H1 (cell line): ENCODE measurements at regions of chrX and their contacts with region 1.

Region 1: DNA sequence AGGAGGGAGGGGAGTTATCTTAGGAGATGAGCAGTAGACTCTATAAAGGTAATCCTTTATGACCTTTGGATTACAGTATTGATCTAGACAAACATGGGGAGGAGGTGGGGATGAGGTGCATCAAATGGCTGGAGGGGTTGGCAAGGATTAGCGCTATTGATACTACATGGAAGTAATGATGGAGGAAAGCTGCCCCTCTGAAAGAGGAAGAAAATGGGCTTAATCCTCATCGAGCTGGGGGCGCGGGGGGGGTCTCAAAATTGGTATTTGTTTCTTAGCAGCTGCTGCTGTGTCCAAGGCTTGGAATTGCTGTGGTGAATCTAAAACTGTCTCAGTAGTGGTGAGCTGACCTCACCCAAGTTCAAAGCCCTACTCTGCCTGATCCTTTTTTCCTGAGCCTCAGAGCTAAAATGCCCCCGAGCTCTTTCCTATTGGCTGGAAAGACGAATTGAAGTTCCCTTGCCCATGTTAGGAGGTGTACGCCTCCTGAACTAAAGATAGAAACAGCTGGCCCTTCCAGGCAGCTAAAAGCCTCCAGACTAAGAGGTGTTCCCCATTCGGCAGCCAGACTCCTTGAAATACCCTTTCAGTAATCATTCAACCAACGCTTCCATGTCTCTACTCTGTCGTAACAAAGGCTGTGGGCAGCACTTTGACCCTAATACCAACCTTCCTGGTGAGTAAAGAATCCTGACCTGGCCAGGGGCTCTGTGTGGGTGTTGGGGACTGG is at the start of gene ITGB1BP2:
- DNase-seq: no peak
- H3K4me3 ChIP-seq: no peak within 1 kb of the TSS
- H3K27ac ChIP-seq: no peak within 1 kb of the TSS
- H3K4me1 ChIP-seq: no peaks in the 10 kb centered on the region
- H3K27me3 ChIP-seq: no peaks in the 10 kb centered on the region
- CTCF ChIP-seq: no peak
- EP300 ChIP-seq: no peak
- POLR2A ChIP-seq: peak in 1 of 2 experiments; percentile 28; a peak in 1 of 3 replicates
- RAD21 ChIP-seq: no peak
- total RNA-seq, gene ITGB1BP2: 5.1 and 5.2 TPM in 2 replicates

Region 2: DNA sequence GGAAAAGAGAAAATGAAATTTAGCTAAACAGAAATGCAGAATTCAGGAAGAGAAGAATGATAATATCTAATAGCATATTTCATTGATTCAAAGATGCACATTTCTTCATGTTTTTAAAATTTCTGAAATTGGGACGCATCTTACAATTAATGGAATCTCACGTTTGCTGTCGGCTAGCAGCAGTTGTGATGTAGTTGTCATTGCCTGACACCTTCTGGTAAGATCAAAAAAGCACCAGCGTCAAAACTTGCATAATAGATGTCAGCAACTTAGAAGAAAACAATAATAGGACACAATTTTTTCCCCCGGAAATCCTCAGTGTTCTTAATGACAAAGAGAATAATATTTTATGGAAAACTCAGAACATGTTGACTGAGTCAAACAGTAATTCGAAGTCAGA is 340.6 kb before region 1 on chrX:
- CTCF ChIA-PET with region 1: no interaction called
- POLR2A ChIA-PET with region 1: no interaction called
- DNase-seq: no peak
- H3K4me3 ChIP-seq: no peak overlapping the region
- H3K27ac ChIP-seq: no peak overlapping the region
- H3K4me1 ChIP-seq: no peaks in the 10 kb centered on the region
- H3K27me3 ChIP-seq: no peaks in the 10 kb centered on the region
- CTCF ChIP-seq: peak in 2 of 3 experiments; percentile 32 to 39; a peak in 2 of 4 replicates
- EP300 ChIP-seq: no peak
- POLR2A ChIP-seq: no peak
- RAD21 ChIP-seq: peak; percentile 62 to 76

Region 3: DNA sequence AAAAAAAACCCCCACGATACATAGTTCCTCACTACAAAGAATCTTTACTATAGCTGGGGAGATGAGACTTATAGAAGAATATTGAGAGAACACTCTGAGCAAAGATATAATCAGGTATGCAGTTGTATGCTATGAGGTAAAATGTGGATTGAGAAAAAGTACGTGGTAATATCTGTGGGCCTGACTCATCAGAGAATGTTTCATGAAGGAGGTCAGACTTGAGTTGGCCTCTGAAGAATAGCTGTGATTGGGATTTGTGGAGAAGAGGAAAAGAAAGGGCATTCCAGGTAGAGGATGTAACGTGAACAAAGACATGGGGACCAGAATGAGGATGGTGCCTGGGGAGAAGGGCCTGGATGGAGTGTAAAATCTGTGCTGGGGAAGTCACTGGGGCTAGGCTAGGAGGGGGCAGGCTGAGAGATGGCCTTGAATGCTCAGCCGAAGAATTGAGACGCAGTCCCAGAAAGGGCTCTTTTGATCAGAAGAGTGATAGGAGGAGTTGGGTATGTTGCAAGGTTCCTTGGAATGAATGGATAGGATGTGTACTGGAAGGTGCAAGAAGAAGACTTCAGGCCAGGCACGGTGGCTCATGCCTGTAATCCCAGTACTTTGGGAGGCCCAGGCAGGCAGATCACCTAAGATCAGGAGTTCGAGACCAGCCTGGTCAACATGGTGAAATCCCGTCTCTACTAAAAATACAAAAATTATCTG is 162.2 kb before region 1 on chrX:
- CTCF ChIA-PET with region 1: no interaction called
- POLR2A ChIA-PET with region 1: no interaction called
- DNase-seq: no peak
- H3K4me3 ChIP-seq: no peak overlapping the region
- H3K27ac ChIP-seq: no peak overlapping the region
- H3K4me1 ChIP-seq: peaks cover 0 to 1% (median under 1%) of the 10 kb centered on the region in 4 experiments; a peak in 1 of 7 replicates
- H3K27me3 ChIP-seq: no peaks in the 10 kb centered on the region
- CTCF ChIP-seq: no peak
- EP300 ChIP-seq: no peak
- POLR2A ChIP-seq: no peak
- RAD21 ChIP-seq: no peak

Region 4: DNA sequence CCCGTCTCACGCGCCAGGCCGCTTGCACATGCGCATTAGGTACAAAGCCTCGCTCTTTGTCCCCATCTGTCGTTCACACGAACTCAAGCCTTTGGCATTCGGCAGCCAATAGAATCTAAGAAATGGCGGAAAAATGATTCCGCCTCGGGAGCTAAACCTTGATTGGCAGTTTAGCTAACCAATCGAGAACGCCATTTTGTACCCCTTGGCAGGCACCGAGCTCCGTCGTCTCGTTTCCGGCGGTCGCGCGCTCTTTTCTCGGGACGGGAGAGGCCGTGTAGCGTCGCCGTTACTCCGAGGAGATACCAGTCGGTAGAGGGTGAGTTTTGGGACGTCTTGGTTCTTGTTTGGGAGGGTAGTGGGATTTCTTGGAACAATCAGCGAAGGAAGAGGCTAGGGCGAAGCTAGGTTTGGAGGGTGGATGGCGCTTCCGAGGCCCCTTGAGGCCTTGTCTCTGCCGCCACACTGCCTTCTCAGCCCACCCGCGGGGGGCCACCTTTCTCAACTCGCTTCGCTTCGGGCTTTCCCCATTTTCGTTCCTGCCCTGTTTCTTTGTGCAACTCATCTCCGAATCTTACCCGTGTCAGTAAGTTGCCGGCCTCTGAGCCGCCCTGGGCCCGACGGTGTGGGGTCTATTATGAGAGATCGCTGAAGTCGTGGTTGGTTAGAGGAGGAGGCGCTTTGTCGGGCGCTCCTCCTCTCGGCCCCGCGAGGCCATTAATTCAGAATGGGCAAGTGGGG is 17.8 kb before region 1 on chrX and contains the start of gene NONO:
- CTCF ChIA-PET with region 1: no interaction called
- POLR2A ChIA-PET with region 1: interaction called, 215 read pairs
- DNase-seq: peak; percentile 70 to 88
- H3K4me3 ChIP-seq: peak within 1 kb of the TSS; percentile 86 to 99 (median 88)
- H3K27ac ChIP-seq: peak within 1 kb of the TSS; percentile 95
- H3K4me1 ChIP-seq: peaks cover 0 to 5% (median 3%) of the 10 kb centered on the region in 4 experiments; a peak in 3 of 7 replicates
- H3K27me3 ChIP-seq: no peaks in the 10 kb centered on the region
- CTCF ChIP-seq: peak in 1 of 3 experiments; percentile 3; a peak in 1 of 4 replicates
- EP300 ChIP-seq: no peak
- POLR2A ChIP-seq: peak; percentile 75 to 96
- RAD21 ChIP-seq: no peak
- total RNA-seq, gene NONO: 728 and 778 TPM in 2 replicates

Region 5: GRCh38 chrX:71315917-71316316 is 14.6 kb after region 1 on chrX:
- CTCF ChIA-PET with region 1: no interaction called
- POLR2A ChIA-PET with region 1: interaction called, 18 read pairs
- DNase-seq: no peak
- H3K4me3 ChIP-seq: no peak overlapping the region
- H3K27ac ChIP-seq: no peak overlapping the region
- H3K4me1 ChIP-seq: no peaks in the 10 kb centered on the region
- H3K27me3 ChIP-seq: no peaks in the 10 kb centered on the region
- CTCF ChIP-seq: no peak
- EP300 ChIP-seq: no peak
- POLR2A ChIP-seq: no peak
- RAD21 ChIP-seq: no peak

Region 6: DNA sequence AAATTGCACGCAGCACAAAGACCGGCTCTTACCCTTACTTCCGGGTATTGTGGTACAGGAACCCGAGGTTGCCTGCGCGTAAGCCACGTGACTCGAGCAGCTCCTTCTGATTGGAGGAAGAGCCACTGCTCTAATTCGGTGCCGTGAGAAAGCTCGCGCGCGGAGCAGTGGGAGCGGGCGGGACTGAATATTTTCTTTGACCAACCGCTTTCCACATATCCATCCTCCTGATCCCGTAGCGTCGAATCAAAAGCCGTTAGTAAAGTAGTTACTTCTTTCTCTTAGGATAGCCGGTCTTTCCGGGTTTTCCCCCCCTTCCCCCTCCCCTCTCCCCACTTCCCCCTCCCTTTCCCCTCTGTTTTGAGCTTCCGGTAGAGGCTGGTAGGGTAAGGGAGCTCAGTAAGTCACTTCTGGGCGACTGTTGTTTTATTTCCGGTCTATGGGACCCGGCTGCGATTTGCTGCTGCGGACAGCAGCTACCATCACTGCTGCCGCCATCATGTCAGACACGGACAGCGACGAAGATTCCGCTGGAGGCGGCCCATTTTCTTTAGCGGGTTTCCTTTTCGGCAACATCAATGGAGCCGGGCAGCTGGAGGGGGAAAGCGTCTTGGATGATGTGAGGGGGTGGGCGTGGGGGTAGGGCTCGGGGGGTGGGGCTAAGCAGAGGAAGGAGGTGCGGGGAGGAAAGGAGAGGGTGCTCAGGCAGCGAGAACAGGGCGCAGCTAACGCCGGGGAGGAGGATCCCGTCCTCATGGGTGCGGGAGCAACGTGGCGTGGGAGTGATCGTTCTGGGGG is 64.7 kb after region 1 on chrX and contains the start of gene TAF1:
- CTCF ChIA-PET with region 1: no interaction called
- POLR2A ChIA-PET with region 1: interaction called, 11 read pairs
- DNase-seq: peak; percentile 73 to 75
- H3K4me3 ChIP-seq: peak within 1 kb of the TSS; percentile 62 to 95 (median 90)
- H3K27ac ChIP-seq: peak within 1 kb of the TSS; percentile 85
- H3K4me1 ChIP-seq: no peaks in the 10 kb centered on the region
- H3K27me3 ChIP-seq: no peaks in the 10 kb centered on the region
- CTCF ChIP-seq: no peak
- EP300 ChIP-seq: no peak
- POLR2A ChIP-seq: peak; percentile 21 to 84; a peak in 2 of 3 replicates
- RAD21 ChIP-seq: no peak
- total RNA-seq, gene TAF1: 30.2 and 30.3 TPM in 2 replicates

Region 7: DNA sequence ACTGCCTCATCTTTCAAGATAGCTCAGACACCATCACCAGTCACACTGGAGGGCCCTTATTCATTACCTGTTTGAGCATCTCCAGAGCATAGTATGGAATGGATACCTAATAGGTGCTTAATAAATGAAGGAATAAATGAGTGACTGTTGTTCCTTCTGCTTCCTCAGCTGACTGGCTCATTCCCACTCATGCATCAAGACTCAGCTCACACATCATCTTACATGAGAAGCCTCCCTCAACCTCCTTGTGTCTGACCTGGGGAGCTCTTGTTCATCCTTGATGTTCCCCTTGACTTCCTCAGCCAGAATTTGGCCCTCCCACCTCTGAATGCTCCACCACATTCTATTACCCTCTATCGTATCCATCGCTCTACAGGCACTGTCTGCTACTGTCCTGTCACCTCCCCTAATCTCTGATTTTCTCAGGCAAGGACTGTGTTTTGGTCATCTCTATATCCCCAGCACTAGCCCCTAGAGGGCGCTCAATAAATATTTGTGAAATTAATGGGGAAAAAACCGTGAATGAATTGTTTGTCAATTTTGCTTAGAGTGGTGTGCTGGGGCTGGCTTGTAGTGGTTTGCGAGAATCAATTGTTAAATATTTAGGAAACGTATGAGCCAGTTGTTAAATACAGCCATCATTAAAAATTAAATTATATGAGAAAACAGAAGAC is 697.6 kb after region 1 on chrX:
- CTCF ChIA-PET with region 1: no interaction called
- POLR2A ChIA-PET with region 1: no interaction called
- DNase-seq: no peak
- H3K4me3 ChIP-seq: no peak overlapping the region
- H3K27ac ChIP-seq: no peak overlapping the region
- H3K4me1 ChIP-seq: peaks cover 5 to 17% (median 14%) of the 10 kb centered on the region in 4 experiments; a peak in 5 of 7 replicates
- H3K27me3 ChIP-seq: no peaks in the 10 kb centered on the region
- CTCF ChIP-seq: peak in 2 of 3 experiments; percentile 28 to 49; a peak in 2 of 4 replicates
- EP300 ChIP-seq: no peak
- POLR2A ChIP-seq: no peak
- RAD21 ChIP-seq: peak; percentile 26 to 43; a peak in 2 of 4 replicates